ENCODE measurements at regions of chrX and their contacts with region 1.

Region 1: DNA sequence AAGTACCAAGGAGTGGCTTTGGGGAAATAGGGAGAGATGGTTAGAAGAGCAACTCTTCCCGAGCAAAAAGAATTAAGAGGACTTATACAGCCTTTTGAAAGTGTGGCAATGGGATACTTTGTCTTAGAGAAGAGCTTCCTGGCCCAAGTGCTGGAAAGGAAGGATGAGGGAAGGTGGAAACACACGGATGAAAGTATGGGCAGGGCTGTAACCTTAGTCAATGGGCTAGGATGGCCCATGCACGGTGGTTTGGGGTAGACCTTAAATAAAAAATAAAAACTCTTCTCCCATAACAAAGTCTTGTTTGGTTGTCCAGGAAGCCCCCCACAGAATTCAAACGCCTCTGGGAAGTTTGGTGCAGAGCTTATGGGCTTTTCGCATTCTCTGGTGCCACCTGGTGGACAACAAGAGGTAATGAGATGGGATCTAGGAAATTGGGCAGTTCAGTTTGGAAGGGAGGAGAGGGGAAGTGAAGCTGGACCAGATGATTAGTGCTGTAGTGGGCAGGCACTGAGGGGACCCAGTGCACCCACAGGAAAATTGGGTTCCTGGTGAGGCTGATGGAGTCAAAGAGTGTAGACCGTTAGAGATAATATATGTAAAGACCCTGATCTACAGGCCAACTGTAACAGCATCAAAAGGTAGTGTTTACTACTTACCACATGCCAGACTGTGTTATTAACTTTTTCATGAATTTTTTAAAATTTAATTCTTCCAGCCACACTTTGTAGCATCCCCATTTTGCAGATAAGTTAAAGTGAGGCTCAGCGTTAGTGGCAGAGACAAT is 13.8 kb upstream of the ENOX2 start:
- DNase-seq: no peak
- H3K4me3 ChIP-seq: no peak overlapping the region
- CTCF ChIP-seq: peak; percentile 45

Region 2: GRCh38 chrX:130393451-130394074 is 523.3 kb before region 1 on chrX:
- CTCF ChIA-PET with region 1: interaction called, 41 read pairs
- POLR2A ChIA-PET with region 1: no interaction called
- DNase-seq: no peak
- H3K4me3 ChIP-seq: no peak overlapping the region
- CTCF ChIP-seq: peak; percentile 69

Region 3: DNA sequence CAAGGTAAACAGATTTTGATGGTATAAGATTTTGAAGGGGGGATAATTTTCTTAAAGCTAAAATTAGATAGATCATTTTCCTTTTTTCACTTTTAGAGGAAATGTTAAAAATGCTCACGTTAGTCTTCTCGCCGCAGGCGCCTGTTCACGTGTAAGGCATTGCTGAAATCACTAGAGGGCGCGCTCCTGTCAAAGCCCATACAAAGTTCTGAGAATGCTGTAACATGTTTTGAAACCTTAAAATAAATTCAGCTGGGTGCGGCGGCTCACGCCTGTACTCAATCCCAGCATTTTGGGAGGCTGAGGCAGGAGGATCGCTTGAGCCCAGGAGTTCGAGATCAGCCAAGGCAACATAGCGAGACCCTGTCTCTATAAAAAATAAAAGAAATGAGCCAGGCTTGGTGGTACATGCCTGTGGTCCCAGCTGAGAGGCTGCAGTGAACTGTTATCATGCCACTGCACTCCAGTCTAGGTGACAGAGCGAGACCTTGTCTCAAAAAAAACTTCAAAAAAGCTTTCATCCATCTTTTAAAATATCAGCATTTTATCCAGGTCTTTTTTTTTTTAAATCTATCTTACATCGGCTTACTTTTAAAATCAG is 377.0 kb before region 1 on chrX:
- CTCF ChIA-PET with region 1: interaction called, 107 read pairs
- POLR2A ChIA-PET with region 1: interaction called, 5 read pairs
- DNase-seq: no peak
- H3K4me3 ChIP-seq: no peak overlapping the region
- CTCF ChIP-seq: peak; percentile 60

Region 4: DNA sequence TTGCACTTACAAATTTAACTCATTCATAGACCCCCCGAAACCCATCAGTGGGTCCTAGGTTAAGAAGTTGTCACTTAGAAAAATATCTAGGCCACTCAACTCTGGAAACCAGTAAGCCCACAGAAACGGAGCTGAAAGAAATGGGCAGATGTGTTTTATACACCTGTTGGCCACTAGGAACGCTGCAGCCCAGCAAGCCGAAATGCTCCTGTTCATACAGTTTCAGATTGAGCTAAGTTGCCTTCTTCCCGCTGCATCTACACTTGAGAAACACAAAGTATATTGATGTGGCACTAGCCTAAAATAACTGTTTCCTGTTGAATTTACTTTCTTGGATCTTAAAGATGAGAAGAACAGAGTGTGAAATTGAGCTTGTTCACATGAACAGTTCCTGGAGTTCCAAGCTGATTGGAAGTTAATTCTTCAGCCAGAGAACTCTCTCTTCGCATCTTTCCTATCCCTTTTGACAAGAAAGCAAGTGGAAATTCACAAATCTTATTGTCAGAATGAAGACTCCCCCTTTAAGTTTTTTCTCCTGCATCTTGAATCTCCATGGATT is 340.9 kb before region 1 on chrX:
- CTCF ChIA-PET with region 1: interaction called, 108 read pairs
- POLR2A ChIA-PET with region 1: no interaction called
- DNase-seq: no peak
- H3K4me3 ChIP-seq: no peak overlapping the region
- CTCF ChIP-seq: peak; percentile 71

Region 5: DNA sequence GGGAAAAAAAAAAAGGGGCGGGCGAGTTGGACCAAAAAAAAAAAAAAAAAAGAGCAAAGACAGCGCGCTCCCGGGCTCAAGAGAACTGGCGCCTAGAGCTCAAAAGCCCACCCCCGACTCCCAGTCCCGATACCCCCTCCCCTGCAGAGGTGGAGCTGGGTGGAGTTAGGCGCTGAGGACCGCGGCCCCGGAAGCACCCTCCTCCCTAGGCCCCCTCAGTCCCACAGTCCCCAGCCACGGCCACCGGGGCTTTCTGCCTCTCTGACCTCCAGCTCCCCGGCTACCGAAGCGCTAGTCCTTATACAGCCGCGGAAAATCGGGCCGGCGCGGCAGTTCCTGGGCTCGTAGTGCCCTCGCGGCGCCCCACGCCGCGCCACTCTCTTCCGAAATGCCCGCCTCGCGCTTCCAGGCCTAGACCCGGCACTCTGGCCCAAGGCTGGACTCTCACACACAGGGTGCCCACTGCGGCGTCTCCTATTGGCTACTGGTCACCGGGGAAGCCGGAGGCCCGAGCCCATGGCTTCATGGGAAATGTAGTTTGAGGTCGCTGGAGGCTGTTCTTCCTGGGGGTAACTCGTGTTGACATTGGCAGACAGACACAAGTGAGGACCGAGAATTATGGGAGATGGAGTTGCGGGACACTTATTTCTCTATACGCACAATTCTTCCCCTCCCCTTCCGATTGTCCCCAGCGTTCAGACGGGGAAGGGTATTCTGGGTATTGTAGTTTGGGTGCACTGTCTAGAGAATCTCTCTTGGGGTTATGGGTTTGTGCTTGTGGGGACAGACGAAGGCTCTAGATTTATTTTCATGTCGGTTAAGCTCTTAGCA is 13.8 kb before region 1 on chrX and contains the start of gene ENOX2:
- CTCF ChIA-PET with region 1: interaction called, 14 read pairs
- POLR2A ChIA-PET with region 1: no interaction called
- DNase-seq: peak; percentile 81
- H3K4me3 ChIP-seq: peak within 1 kb of the TSS; percentile 70
- CTCF ChIP-seq: no peak

Measured in AG04449 (cell line).